MCF 10A (cell line): ENCODE measurements at regions of chr17 and their contacts with region 1.

Region 1: GRCh38 chr17:56715613-56716357 is 117.9 kb downstream of the C17orf67 start:
- DNase-seq: peak; percentile 85
- H3K4me3 Mint-ChIP-seq: no peak overlapping the region
- H3K27ac Mint-ChIP-seq: no peak overlapping the region
- H3K4me1 Mint-ChIP-seq: peaks cover 10% of the 10 kb centered on the region
- H3K27me3 Mint-ChIP-seq: no peaks in the 10 kb centered on the region
- CTCF ChIP-seq: peak; percentile 77

Region 2: DNA sequence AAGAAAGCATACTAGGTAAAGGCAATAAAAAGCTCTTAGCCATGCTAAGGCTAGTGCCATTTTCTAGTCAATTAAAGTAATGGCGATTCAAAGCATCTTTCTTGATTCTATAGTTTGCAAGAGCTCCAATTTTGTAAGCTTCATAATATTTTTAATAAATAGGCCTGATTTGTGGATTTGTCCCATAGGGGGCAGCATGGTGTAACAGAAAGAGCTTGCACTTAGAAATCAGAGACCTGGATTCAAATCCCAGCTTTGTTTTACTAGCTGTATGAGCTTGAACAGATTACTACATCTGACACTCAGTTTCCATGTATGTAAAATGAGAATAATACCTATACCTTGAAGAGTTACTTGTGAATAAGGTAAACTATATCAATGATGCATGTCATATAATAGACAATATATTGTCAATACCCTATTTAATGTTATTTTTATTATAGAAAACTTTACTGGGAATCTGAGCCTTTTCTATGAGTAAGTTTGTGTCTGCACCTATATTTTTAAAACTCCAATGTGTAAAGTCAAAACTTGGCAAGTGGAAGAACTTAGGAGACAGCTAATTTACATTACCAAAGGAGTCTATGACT is 215.9 kb before region 1 on chr17:
- CTCF ChIA-PET with region 1: interaction called, 22 read pairs
- POLR2A ChIA-PET with region 1: no interaction called
- intact Hi-C with region 1: loop called (anchors 1 kb)
- DNase-seq: peak; percentile 56
- H3K4me3 Mint-ChIP-seq: no peak overlapping the region
- H3K27ac Mint-ChIP-seq: no peak overlapping the region
- H3K4me1 Mint-ChIP-seq: no peaks in the 10 kb centered on the region
- H3K27me3 Mint-ChIP-seq: peaks cover 8% of the 10 kb centered on the region
- CTCF ChIP-seq: peak; percentile 35

Region 3: GRCh38 chr17:56592487-56593085 is 123.2 kb before region 1 on chr17:
- CTCF ChIA-PET with region 1: interaction called, 275 read pairs
- POLR2A ChIA-PET with region 1: interaction called, 29 read pairs
- intact Hi-C with region 1: loop called (anchors 1 kb)
- DNase-seq: peak; percentile 52
- H3K4me3 Mint-ChIP-seq: peak overlapping the region; percentile 75
- H3K27ac Mint-ChIP-seq: no peak overlapping the region
- H3K4me1 Mint-ChIP-seq: no peaks in the 10 kb centered on the region
- H3K27me3 Mint-ChIP-seq: peaks cover 24% of the 10 kb centered on the region
- CTCF ChIP-seq: peak; percentile 92

Region 4: GRCh38 chr17:56638591-56639051 is 77.2 kb before region 1 on chr17:
- CTCF ChIA-PET with region 1: interaction called, 13 read pairs
- POLR2A ChIA-PET with region 1: no interaction called
- intact Hi-C with region 1: no loop called
- DNase-seq: no peak
- H3K4me3 Mint-ChIP-seq: no peak overlapping the region
- H3K27ac Mint-ChIP-seq: no peak overlapping the region
- H3K4me1 Mint-ChIP-seq: peaks cover 2% of the 10 kb centered on the region
- H3K27me3 Mint-ChIP-seq: no peaks in the 10 kb centered on the region
- CTCF ChIP-seq: no peak

Region 5: DNA sequence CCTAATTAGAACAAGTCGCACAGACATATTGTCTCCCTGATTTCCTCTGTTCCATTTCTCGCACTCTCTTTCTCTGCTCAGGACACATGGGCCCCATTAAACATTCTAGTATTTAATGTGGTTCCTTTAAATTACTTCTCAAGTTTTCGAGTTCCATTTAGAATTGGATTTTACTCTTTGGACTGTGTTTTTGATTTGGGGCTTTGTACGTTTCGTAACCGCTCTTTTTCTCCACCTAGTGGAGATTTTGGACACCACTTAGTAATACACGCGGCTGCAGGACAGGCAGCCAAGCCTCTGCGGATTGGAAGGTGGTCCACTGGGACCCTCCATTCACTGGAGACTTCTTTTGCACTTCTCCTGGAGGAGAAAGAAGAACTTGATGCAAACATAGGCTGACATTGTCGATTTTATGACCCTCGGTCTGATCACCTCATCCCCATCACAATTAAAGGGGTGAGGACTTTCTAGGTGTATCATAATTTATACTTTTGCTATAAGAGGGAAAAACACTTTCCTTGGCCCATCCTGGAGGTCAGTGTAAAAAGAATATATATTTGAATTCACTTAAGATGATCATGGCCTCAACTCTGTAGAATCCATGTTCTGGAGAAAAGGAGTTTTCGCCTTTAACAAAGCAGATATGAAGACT is 36.5 kb before region 1 on chr17:
- CTCF ChIA-PET with region 1: interaction called, 14 read pairs
- POLR2A ChIA-PET with region 1: no interaction called
- intact Hi-C with region 1: no loop called
- DNase-seq: peak; percentile 23
- H3K4me3 Mint-ChIP-seq: no peak overlapping the region
- H3K27ac Mint-ChIP-seq: no peak overlapping the region
- H3K4me1 Mint-ChIP-seq: peaks cover 19% of the 10 kb centered on the region
- H3K27me3 Mint-ChIP-seq: no peaks in the 10 kb centered on the region
- CTCF ChIP-seq: no peak

Region 6: DNA sequence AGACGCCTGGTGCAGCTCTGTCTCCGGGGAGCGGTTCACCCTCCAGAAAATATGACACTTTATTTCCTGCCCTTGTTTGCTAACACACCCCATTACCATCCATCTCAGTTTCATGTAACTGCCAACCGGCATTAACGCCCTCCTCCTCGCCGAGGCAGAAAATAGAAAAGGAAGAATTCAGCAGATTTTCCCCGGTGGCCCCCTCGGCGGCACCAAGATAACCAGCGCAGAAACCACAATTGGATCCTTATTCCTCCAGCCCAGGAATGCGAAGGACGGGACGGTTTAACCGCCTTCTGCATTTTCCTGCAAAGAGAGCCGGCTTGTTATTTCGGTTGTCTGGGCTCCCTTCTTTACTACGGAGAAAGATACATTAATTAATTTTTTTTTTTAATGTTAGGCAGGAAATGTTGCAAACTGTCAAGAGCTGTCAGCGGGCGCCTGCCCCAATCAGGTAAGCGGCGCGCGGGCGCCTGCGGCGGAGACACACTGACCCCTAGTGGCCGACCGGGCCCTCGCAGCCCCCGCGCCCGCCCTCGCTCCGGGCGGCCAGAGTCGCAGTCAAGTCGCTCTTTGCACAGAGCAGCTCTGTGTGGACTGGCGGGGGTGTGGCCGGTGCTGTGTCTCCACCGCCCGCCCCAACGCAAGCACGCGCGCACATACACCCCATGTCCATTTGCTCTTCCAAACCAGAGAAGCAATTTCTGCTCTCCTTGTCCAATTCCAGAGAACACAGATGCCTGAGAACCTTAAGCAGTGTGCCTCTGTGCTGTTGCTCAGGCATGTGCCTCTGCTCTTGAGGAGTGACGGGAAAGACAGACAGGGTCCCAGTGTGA is 64.3 kb after region 1 on chr17:
- CTCF ChIA-PET with region 1: interaction called, 67 read pairs
- POLR2A ChIA-PET with region 1: interaction called, 19 read pairs
- intact Hi-C with region 1: loop called (anchors 1 kb)
- DNase-seq: peak; percentile 79
- H3K4me3 Mint-ChIP-seq: peak overlapping the region; percentile 82
- H3K27ac Mint-ChIP-seq: no peak overlapping the region
- H3K4me1 Mint-ChIP-seq: peaks cover 32% of the 10 kb centered on the region
- H3K27me3 Mint-ChIP-seq: no peaks in the 10 kb centered on the region
- CTCF ChIP-seq: peak; percentile 94

Region 7: DNA sequence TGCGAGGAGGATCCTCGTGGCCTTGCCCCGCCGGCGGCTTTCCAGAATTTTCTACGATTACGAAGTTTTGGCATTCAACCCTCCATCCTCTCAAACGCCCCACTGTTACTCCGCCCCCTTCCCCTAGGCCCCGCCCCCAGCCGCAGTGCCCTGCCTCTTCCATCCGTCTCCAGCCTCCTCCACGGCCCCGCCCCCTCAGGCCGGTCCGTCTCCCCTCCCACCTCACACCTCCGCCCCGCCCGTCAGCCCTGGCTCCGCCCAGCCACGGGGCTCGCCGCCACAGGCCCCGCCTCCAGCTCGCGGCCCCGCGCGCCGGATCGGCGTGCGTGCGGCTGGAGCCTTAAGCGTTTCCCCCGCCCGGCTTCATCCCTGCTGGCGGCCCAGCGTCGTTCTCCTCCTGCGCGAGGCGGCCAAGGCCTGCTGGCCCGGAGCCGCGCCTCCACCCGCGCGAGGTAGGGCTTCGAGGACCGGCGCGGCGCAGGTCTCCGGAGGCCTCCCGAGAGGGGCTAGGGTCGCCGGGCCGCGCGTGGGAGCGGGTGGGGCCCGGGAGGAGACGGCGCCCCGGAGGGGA is 118.1 kb after region 1 on chr17 and contains the starts of genes C17orf67 and DGKE:
- CTCF ChIA-PET with region 1: no interaction called
- POLR2A ChIA-PET with region 1: no interaction called
- intact Hi-C with region 1: no loop called
- DNase-seq: peak; percentile 96
- H3K4me3 Mint-ChIP-seq: peak within 1 kb of the TSS; percentile 97
- H3K27ac Mint-ChIP-seq: peak within 1 kb of the TSS; percentile 66
- H3K4me1 Mint-ChIP-seq: peaks cover 47% of the 10 kb centered on the region
- H3K27me3 Mint-ChIP-seq: no peaks in the 10 kb centered on the region
- CTCF ChIP-seq: no peak
- total RNA-seq, gene C17orf67: 3.3 and 3.5 TPM in 2 replicates
- total RNA-seq, gene DGKE: 16.5 and 23.9 TPM in 2 replicates